ENCODE measurements at regions of chr5 and their contacts with region 1.

Region 1: DNA sequence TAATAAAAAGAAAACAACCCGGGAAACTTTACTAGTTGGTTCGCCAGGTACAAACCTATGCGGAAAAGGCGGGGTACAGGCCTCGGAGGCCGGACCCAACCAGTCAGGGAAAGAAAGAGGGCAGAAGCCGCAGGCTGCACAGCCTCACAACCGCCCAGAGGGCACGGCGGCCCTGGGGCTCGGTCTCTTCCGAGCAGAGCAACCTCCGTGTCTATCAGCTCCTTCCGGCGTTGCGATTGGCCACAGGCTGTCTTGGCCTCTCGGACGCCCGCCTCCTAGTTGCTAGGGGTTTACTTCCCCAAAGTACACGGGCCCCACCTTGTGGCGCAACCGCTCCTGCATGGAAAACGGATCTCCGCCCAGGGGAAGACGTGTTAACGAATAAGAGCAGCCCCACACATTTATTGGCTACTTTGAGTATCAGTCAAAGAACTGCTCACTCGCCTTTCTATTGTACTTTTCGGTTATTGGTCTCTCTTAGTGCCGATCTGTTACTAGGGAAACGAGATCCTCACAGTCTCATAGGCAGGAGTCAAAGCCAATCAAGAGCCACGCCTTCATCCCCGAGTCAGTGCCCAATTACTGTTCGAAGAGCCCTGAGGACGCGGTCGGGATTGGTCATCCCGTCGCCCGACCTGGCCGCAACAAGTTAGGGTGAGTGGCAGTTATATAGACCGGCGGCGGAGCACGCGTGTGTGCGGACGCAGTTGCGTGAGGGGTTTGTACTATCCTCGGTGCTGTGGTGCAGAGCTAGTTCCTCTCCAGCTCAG is at the start of gene G3BP1:
- DNase-seq: peak; percentile 94
- ATAC-seq: peak; percentile 86
- H3K4me3 Mint-ChIP-seq: peak within 1 kb of the TSS; percentile 86
- H3K27ac Mint-ChIP-seq: peak within 1 kb of the TSS; percentile 84
- H3K4me1 Mint-ChIP-seq: peaks cover 35% of the 10 kb centered on the region
- H3K27me3 Mint-ChIP-seq: no peaks in the 10 kb centered on the region
- total RNA-seq, gene G3BP1: 164 to 178 TPM

Region 2: GRCh38 chr5:151659001-151659754 is 112.3 kb before region 1 on chr5:
- POLR2A ChIA-PET with region 1: interaction called, 20 read pairs
- DNase-seq: peak; percentile 87
- ATAC-seq: peak; percentile 94
- H3K4me3 Mint-ChIP-seq: no peak overlapping the region
- H3K27ac Mint-ChIP-seq: no peak overlapping the region
- H3K4me1 Mint-ChIP-seq: peaks cover 15% of the 10 kb centered on the region
- H3K27me3 Mint-ChIP-seq: peaks cover 12% of the 10 kb centered on the region

Region 3: DNA sequence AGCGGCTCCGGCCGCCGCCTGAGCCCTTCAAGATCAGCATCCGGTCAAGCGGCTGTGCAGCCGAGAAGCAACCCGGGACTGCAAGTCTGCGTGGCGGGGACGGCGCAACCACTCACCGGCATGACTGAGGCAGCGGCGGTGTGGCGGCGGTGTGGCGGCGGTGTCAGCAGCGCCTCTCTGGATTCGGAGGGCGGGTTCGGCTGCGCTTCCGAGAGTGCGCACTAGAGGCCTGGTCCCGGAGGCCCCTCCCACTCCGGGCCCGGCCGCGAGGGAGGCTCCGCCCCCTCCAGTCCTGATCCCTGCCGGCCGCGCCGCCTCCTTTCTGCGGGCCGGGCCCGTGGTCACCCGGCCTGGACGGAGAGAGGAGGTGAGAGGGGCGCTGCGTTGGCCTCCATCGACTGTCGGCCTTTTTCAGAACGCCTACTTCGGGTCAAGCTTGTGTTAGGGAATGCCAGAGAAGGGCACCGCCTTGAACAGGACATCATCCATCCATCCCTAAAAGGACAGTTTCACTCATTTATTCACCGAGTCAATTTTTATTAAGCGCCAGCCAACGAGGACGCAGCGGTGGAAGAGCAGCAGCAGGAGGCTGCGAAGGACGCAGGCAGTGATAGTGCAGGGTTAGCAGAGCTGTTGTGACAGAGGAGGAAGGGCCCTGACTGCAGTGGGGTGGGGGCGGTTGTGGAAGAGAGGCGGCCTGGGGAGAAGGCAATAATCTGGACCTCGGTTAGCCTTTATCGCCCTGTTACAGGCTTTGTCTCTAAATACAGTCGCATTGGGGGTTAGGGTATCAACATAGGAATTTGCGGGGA is 12.8 kb before region 1 on chr5 and contains the start of gene ATOX1:
- POLR2A ChIA-PET with region 1: interaction called, 102 read pairs
- DNase-seq: peak; percentile 95
- ATAC-seq: peak; percentile 98
- H3K4me3 Mint-ChIP-seq: peak within 1 kb of the TSS; percentile 92
- H3K27ac Mint-ChIP-seq: peak within 1 kb of the TSS; percentile 88
- H3K4me1 Mint-ChIP-seq: peaks cover 20% of the 10 kb centered on the region
- H3K27me3 Mint-ChIP-seq: no peaks in the 10 kb centered on the region
- total RNA-seq, gene ATOX1: 42.7 to 48.1 TPM

Measured in activated naive CD8-positive, alpha-beta T cell treated with anti-CD3 and anti-CD28 coated beads, Interleukin-2, amount 10 ng/mL, durations not matched to agents 7 days and 5 days (primary cell).